Tibial artery (tissue), 4 donors: ENCODE measurements at regions of chr14 and their contacts with region 1.

Region 1: GRCh38 chr14:89933002-89933401 is 21.5 kb downstream of the EFCAB11 start:
- DNase-seq: no peak
- H3K4me3 ChIP-seq: no peak overlapping the region
- H3K27ac ChIP-seq: no peak overlapping the region
- H3K4me1 ChIP-seq: no peaks in the 10 kb centered on the region
- H3K27me3 ChIP-seq: no peaks in the 10 kb centered on the region
- CTCF ChIP-seq: no peak

Region 2: GRCh38 chr14:89983375-89983774 is 50.4 kb after region 1 on chr14:
- intact Hi-C with region 1: loop called (anchors 5 kb)
- DNase-seq: no peak
- H3K4me3 ChIP-seq: no peak overlapping the region
- H3K27ac ChIP-seq: no peak overlapping the region
- H3K4me1 ChIP-seq: no peaks in the 10 kb centered on the region
- H3K27me3 ChIP-seq: no peaks in the 10 kb centered on the region
- CTCF ChIP-seq: no peak